Activated CD4-positive, alpha-beta memory T cell treated with anti-CD3 and anti-CD28 coated beads for 36 hours (primary cell): ENCODE measurements at regions of chr3 and their contacts with region 1.

Region 1: DNA sequence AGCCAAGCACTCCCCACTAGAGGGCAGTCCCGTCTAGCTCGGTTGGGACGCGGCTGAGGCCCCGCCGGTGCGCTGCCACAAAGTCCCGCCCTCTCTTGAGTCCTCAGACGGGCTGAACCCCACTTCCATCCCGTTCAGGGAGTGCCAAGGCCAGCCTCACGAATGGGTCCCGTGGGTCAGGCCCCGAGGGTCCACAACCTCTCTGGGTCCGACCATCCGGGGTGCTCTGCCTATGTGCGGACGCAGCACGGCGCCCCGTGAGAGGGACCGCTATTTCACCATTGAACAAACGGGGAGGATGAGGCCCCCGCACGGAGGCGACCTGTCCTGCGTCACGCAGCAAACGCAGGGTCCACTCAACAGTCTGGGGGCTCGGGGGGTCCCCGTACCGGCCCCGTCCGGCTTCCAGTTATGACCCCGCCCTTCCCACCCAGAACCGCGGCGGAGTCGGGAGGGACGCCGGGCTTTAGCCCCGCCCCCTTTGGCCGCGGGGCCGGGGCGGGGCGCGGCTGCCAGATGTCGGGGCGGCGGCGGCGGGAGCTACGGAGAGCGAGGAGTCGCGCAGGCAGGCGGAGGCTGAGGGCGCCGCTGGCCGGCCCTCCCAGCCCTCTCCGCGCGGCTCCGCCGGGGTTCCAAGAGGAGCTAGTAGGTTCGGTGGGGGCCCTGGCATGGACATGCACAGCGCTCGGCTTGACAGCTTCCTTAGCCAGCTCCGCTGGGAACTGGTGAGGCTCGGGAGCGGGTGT is at the start of gene INKA1:
- DNase-seq: peak; percentile 92
- H3K4me3 Mint-ChIP-seq: peak within 1 kb of the TSS; percentile 88
- H3K27ac Mint-ChIP-seq: peak within 1 kb of the TSS; percentile 82
- H3K4me1 Mint-ChIP-seq: peaks cover 37% of the 10 kb centered on the region
- H3K27me3 Mint-ChIP-seq: peaks cover 8% of the 10 kb centered on the region
- total RNA-seq, gene INKA1: 1.0 to 1.2 TPM

Region 2: DNA sequence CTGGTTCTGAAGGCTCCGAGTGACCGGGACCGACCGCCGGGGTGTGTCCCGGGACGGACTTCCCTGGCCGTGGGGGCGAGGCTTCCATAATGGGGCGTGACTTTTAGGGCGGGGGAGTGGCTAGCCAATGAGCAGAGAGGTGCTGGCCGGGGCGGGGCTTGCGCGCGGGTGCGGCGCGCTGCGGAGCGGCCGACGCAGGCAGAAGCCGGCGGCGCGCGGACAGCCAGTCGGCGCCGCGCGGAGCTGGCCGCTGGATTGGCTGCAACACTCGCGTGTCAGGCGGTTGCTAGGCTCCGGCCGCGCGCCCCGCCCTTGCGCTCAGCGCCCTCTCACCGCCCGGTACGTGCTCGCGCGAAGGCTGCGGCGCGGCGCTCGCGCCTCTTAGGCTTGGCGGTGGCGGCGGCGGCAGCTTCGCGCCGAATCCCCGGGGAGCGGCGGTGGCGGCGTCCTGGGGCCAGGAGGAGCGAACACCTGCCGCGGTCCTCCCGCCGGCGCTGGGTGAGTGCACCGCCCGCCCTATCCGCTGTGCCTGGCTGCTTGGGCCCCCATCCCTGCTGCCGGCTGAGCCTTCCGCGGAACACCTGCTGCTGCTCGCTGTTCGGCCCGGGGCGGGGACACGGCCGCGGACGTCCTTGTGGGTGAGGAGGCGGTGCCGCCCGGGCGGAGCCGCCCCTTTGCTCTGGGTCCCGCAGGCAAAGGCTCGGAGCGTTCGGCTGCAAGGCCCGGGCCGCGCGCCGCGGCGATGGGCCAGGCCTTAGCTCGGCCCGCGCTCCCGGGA is 332.8 kb before region 1 on chr3 and contains the start of gene DAG1:
- CTCF ChIA-PET with region 1: no interaction called
- POLR2A ChIA-PET with region 1: no interaction called
- intact Hi-C with region 1: loop called (anchors 1 kb)
- DNase-seq: peak; percentile 97
- H3K4me3 Mint-ChIP-seq: peak within 1 kb of the TSS; percentile 91
- H3K27ac Mint-ChIP-seq: peak within 1 kb of the TSS; percentile 87
- H3K4me1 Mint-ChIP-seq: peaks cover 21% of the 10 kb centered on the region
- H3K27me3 Mint-ChIP-seq: no peaks in the 10 kb centered on the region
- total RNA-seq, gene DAG1: 9.4 to 9.6 TPM

Region 3: GRCh38 chr3:49813497-49814174 is 10.7 kb after region 1 on chr3 and contains the start of gene UBA7:
- CTCF ChIA-PET with region 1: interaction called, 28 read pairs
- POLR2A ChIA-PET with region 1: interaction called, 17 read pairs
- intact Hi-C with region 1: loop called (anchors 1 kb)
- DNase-seq: peak; percentile 57
- H3K4me3 Mint-ChIP-seq: peak within 1 kb of the TSS; percentile 93
- H3K27ac Mint-ChIP-seq: peak within 1 kb of the TSS; percentile 90
- H3K4me1 Mint-ChIP-seq: peaks cover 26% of the 10 kb centered on the region
- H3K27me3 Mint-ChIP-seq: no peaks in the 10 kb centered on the region
- total RNA-seq, gene UBA7: 85.6 to 86.4 TPM

Region 4: DNA sequence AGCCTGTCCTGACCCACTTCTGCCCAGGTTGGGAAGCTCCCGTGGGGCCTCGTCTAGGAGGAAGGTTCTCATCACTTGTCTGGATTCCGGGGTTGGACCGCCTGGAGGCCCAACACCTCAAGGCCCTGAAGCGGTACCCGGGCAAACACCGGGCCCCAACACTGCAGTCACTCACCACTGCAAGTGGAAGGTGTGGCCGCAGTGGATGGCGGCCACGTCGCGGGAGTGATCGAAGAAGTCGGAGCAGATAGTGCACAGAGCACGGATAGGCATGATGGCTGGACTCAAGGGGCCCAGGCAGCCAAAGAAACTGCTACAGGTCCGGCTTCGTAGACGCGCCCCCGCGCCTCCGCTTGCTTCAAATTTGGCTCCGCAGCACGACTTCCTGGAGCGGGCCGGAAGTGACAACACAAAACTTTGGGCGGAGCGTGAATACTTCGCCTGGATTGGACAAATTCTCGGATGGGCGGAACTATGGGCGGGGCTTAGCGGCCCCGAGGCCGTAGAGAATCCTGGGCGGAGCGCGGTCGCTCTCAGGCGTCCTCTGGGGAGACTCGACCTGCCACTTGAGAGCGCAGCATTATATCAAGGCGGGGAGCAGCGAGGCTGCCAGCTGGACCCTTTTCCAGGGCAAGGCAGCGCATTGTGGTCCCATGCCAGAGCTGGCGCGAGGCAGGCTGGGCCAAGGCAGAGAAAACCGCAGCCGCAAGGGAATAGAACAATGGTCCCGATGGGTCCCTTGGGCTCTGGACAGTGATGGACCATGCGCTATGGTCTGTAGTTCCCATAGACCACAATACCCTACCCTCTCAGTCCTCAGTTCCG is 53.5 kb after region 1 on chr3 and contains the start of gene TRAIP:
- CTCF ChIA-PET with region 1: interaction called, 10 read pairs
- POLR2A ChIA-PET with region 1: no interaction called
- intact Hi-C with region 1: no loop called
- DNase-seq: peak; percentile 96
- H3K4me3 Mint-ChIP-seq: peak within 1 kb of the TSS; percentile 97
- H3K27ac Mint-ChIP-seq: peak within 1 kb of the TSS; percentile 72
- H3K4me1 Mint-ChIP-seq: peaks cover 13% of the 10 kb centered on the region
- H3K27me3 Mint-ChIP-seq: no peaks in the 10 kb centered on the region
- total RNA-seq, gene TRAIP: 22.7 to 25.3 TPM

Region 5: GRCh38 chr3:50088725-50089608 is 286.1 kb after region 1 on chr3 and contains the start of gene RBM5:
- CTCF ChIA-PET with region 1: interaction called, 5 read pairs
- POLR2A ChIA-PET with region 1: interaction called, 3 read pairs
- intact Hi-C with region 1: loop called (anchors 2 kb)
- DNase-seq: peak; percentile 96
- H3K4me3 Mint-ChIP-seq: peak within 1 kb of the TSS; percentile 98
- H3K27ac Mint-ChIP-seq: peak within 1 kb of the TSS; percentile 96
- H3K4me1 Mint-ChIP-seq: peaks cover 24% of the 10 kb centered on the region
- H3K27me3 Mint-ChIP-seq: no peaks in the 10 kb centered on the region
- total RNA-seq, gene RBM5: 95.2 to 107 TPM